Activated CD4-positive, alpha-beta T cell treated with anti-CD3 and anti-CD28 coated beads for 36 hours (primary cell): ENCODE measurements at regions of chr9 and their contacts with region 1.

Region 1: GRCh38 chr9:122810306-122810946 is 10.5 kb downstream of the OR1K1 start:
- DNase-seq: peak; percentile 86
- ATAC-seq: peak; percentile 45
- H3K4me3 Mint-ChIP-seq: no peak overlapping the region
- H3K27ac Mint-ChIP-seq: no peak overlapping the region
- H3K4me1 Mint-ChIP-seq: peaks cover 29% of the 10 kb centered on the region
- H3K27me3 Mint-ChIP-seq: no peaks in the 10 kb centered on the region

Region 2: DNA sequence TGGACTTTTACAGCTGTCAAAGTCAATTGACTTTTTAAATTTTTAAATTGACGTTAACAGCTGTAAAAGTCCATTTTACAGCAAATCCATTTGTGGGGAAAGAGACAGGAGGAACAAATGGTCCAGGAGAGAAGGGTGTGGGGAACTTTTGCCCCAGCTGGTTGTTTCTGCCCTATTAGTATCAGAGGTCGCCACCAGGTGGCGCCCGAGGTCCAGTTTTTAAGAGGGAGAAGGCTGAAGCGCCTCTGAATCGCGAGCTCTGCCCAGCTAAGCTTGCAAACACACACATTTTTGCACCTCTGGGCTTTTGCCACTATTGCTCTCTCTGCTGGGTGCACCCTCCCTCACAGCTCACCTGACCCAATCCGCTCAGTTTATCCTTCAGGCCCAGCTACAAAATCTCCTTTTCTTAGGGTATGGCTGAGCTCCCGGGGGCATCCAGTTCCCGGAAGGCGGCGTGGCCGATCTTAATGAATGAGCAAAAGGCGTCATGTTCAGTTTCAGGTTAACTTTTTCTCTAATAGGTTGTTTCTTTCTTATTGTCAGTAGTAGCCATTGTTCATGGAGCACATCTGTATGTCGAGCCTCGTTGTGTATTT is 711.1 kb before region 1 on chr9:
- CTCF ChIA-PET with region 1: interaction called, 13 read pairs
- POLR2A ChIA-PET with region 1: no interaction called
- intact Hi-C with region 1: loop called (anchors 1 to 2 kb)
- DNase-seq: peak; percentile 89
- ATAC-seq: peak; percentile 88
- H3K4me3 Mint-ChIP-seq: peak overlapping the region; percentile 52
- H3K27ac Mint-ChIP-seq: no peak overlapping the region
- H3K4me1 Mint-ChIP-seq: peaks cover 10% of the 10 kb centered on the region
- H3K27me3 Mint-ChIP-seq: peaks cover 14% of the 10 kb centered on the region

Region 3: GRCh38 chr9:122134822-122135528 is 675.5 kb before region 1 on chr9:
- CTCF ChIA-PET with region 1: no interaction called
- POLR2A ChIA-PET with region 1: no interaction called
- intact Hi-C with region 1: no loop called
- DNase-seq: no peak
- ATAC-seq: no peak
- H3K4me3 Mint-ChIP-seq: no peak overlapping the region
- H3K27ac Mint-ChIP-seq: no peak overlapping the region
- H3K4me1 Mint-ChIP-seq: no peaks in the 10 kb centered on the region
- H3K27me3 Mint-ChIP-seq: peaks cover 8% of the 10 kb centered on the region

Region 4: DNA sequence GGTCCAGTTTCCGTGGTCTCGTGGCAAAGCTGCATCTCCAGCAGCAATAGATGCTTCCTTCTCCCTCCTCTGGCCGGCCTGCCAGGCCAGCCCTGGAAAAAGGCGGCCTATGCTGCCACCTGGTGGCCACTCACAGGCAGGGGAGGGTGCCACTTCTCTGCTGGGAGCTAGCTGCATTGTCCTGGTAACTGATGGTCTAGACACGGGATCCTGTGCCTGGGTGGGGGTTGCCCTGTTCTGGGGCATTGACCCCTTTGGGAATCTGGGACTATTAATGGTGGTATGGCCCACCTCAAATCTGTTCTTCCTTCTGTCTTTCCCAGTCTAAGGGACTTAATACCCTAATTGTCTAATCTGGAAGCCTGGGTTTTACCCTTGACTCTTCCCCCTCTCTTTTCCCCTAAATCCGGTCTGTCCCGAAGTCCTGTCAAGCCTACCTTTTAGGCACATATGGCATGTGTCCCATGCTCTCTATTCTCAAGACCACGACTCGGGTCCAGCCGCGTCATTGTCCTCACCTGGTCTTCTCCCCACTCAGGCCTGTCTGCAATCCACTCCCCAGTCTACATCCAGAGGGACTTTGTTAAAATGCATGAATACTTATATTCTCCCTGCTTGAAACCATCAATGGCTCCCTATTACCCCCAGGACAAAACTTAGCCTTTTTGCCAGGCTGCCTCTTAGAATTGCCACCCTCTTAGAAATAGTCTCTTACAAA is 459.6 kb before region 1 on chr9:
- CTCF ChIA-PET with region 1: interaction called, 7 read pairs
- POLR2A ChIA-PET with region 1: no interaction called
- intact Hi-C with region 1: loop called in 1 of 2 experiments (anchors 1 kb)
- DNase-seq: peak; percentile 89
- ATAC-seq: peak; percentile 90
- H3K4me3 Mint-ChIP-seq: no peak overlapping the region
- H3K27ac Mint-ChIP-seq: no peak overlapping the region
- H3K4me1 Mint-ChIP-seq: peaks cover 7% of the 10 kb centered on the region
- H3K27me3 Mint-ChIP-seq: peaks cover 26% of the 10 kb centered on the region

Region 5: DNA sequence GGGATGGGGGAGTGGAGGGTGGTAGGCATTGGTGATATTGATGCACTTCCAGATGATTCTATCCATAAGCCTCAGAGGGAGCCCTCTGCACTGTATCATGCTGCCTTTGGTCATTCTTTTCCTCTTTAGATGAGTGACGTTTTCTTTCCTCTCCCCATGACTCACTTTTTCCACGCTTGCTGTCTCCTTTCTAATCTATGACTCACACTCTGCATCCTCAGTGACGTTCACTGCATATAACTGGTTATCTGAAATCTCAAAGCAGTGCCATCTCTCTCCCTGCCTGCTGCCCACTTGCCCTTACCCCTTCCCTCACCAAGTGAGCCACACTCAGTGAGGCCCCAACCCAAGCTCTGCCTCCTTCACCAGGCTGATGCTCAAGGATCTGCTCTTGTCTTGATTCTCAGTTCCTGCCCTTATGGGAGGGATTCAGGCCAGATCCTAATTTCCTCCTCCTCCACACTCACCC is 408.0 kb before region 1 on chr9:
- CTCF ChIA-PET with region 1: no interaction called
- POLR2A ChIA-PET with region 1: no interaction called
- intact Hi-C with region 1: loop called in 1 of 2 experiments (anchors 2 kb)
- DNase-seq: peak; percentile 76
- ATAC-seq: peak; percentile 96
- H3K4me3 Mint-ChIP-seq: peak overlapping the region; percentile 48
- H3K27ac Mint-ChIP-seq: peak overlapping the region; percentile 58
- H3K4me1 Mint-ChIP-seq: peaks cover 15% of the 10 kb centered on the region
- H3K27me3 Mint-ChIP-seq: peaks cover 19% of the 10 kb centered on the region

Region 6: GRCh38 chr9:122797316-122798063 is 12.9 kb before region 1 on chr9:
- CTCF ChIA-PET with region 1: interaction called, 4 read pairs
- POLR2A ChIA-PET with region 1: no interaction called
- intact Hi-C with region 1: loop called in 1 of 2 experiments (anchors 1 kb)
- DNase-seq: no peak
- ATAC-seq: peak; percentile 60
- H3K4me3 Mint-ChIP-seq: no peak overlapping the region
- H3K27ac Mint-ChIP-seq: no peak overlapping the region
- H3K4me1 Mint-ChIP-seq: no peaks in the 10 kb centered on the region
- H3K27me3 Mint-ChIP-seq: no peaks in the 10 kb centered on the region